Mammary epithelial cell (primary cell): ENCODE measurements at regions of chr2 and their contacts with region 1.

Region 1: GRCh38 chr2:216666461-216667233 is 28.7 kb downstream of the IGFBP5 start:
- DNase-seq: peak; percentile 67
- H3K4me3 ChIP-seq: no peak overlapping the region
- H3K27ac ChIP-seq: no peak overlapping the region
- H3K4me1 ChIP-seq: peaks cover 30% of the 10 kb centered on the region
- H3K27me3 ChIP-seq: no peaks in the 10 kb centered on the region
- CTCF ChIP-seq: peak; percentile 99 to 100

Region 2: GRCh38 chr2:215949991-215950404 is 716.6 kb before region 1 on chr2:
- CTCF ChIA-PET with region 1: no interaction called
- dilution Hi-C with region 1: no loop called
- in situ Hi-C with region 1: no loop called
- intact Hi-C with region 1: loop called (anchors 5 kb)
- DNase-seq: peak; percentile 60
- H3K4me3 ChIP-seq: no peak overlapping the region
- H3K27ac ChIP-seq: no peak overlapping the region
- H3K4me1 ChIP-seq: no peaks in the 10 kb centered on the region
- H3K27me3 ChIP-seq: no peaks in the 10 kb centered on the region
- CTCF ChIP-seq: peak; percentile 62 to 70

Region 3: DNA sequence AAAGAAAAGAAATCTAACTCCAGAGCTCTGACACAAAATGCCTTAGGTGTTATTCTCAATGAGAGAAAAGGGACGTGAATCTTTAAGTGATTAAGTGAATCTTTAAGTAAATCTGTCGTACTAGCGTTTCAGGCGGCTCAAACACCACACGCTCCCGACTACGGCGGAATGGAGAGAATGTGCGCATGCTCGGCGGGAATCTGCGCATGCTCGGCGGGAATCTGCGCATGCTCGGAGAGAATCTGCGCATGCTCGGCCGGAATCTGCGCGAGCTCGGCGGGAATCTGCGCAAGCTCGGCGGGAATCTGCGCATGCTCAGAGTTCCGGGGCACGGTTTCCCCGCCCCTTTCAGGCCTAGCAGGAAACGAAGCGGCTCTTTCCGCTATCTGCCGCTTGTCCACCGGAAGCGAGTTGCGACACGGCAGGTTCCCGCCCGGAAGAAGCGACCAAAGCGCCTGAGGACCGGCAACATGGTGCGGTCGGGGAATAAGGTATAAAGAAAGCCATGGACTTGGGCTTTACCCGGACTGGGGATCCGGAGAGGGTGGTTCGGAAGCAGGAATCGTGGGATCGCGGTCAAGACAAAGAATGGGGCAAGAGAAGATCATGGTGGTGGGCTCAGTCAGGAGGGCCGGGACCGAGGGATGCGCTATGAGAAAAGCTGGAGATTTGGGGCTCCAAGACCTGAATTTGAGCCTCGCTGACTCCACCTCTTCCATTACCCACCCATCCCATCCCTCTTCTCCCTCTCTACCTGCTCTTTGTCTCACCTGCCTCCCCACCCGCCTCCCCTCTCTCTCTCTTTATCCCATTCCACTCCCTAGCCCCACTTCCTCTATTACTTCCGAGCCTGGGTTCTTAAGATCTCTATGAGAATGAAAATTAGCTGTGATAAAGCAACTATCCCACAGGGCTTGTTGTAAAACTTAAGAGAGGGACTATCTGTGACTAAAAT is 557.4 kb before region 1 on chr2 and contains the start of gene XRCC5:
- CTCF ChIA-PET with region 1: no interaction called
- dilution Hi-C with region 1: no loop called
- in situ Hi-C with region 1: no loop called
- intact Hi-C with region 1: loop called (anchors 1 kb)
- DNase-seq: peak; percentile 95
- H3K4me3 ChIP-seq: peak within 1 kb of the TSS; percentile 85 to 90 (median 89)
- H3K27ac ChIP-seq: peak within 1 kb of the TSS; percentile 86
- H3K4me1 ChIP-seq: peaks cover 18% of the 10 kb centered on the region
- H3K27me3 ChIP-seq: no peaks in the 10 kb centered on the region
- CTCF ChIP-seq: no peak
- total RNA-seq, gene XRCC5: 191 to 245 TPM

Region 4: DNA sequence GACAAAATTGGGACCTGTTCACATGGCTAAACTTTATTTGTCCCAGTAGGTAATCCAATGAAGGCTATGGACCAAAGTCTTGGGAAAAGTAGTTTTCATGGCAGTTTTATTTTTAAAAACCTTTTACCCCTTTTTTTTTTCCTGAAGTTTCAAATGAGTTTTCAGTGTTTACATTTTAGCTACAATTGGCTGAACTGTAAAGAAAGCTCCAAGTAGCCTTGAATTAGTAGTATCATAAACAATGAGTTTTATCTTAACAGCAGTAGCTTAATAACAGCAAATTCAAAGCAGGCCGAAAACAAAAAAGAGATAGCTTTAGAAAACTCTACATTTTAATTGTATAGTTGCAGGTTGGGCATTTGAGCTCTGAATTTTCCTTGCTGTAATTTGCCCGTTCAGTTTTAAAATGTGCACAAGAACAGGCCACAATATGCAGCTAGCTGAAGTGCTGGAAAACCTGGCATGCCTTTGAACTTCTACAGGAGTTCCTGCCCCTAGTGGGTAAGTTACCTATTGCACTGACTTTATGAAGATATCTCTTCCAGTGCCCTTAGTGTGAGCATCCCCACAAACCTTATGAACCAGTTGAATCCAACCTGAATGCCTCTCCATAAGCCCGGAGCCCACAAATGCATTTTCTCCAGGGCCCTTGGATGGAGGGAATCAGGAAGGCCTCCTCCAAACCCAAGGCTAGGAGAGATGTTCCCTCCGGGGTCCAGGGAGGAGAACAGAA is 450.8 kb before region 1 on chr2:
- CTCF ChIA-PET with region 1: no interaction called
- dilution Hi-C with region 1: no loop called
- in situ Hi-C with region 1: no loop called
- intact Hi-C with region 1: loop called (anchors 10 kb)
- DNase-seq: no peak
- H3K4me3 ChIP-seq: no peak overlapping the region
- H3K27ac ChIP-seq: no peak overlapping the region
- H3K4me1 ChIP-seq: peaks cover 28% of the 10 kb centered on the region
- H3K27me3 ChIP-seq: no peaks in the 10 kb centered on the region
- CTCF ChIP-seq: peak; percentile 47 to 54

Region 5: GRCh38 chr2:216328347-216328746 is 338.3 kb before region 1 on chr2:
- CTCF ChIA-PET with region 1: no interaction called
- dilution Hi-C with region 1: no loop called
- in situ Hi-C with region 1: no loop called
- intact Hi-C with region 1: loop called (anchors 5 kb)
- DNase-seq: no peak
- H3K4me3 ChIP-seq: no peak overlapping the region
- H3K27ac ChIP-seq: no peak overlapping the region
- H3K4me1 ChIP-seq: no peaks in the 10 kb centered on the region
- H3K27me3 ChIP-seq: no peaks in the 10 kb centered on the region
- CTCF ChIP-seq: peak; percentile 39 to 48

Region 6: GRCh38 chr2:216519154-216519762 is 147.4 kb before region 1 on chr2:
- CTCF ChIA-PET with region 1: interaction called, 8 read pairs
- dilution Hi-C with region 1: no loop called
- in situ Hi-C with region 1: loop called (anchors 5 kb)
- intact Hi-C with region 1: loop called (anchors 1 kb)
- DNase-seq: peak; percentile 70
- H3K4me3 ChIP-seq: no peak overlapping the region
- H3K27ac ChIP-seq: no peak overlapping the region
- H3K4me1 ChIP-seq: peaks cover 15% of the 10 kb centered on the region
- H3K27me3 ChIP-seq: no peaks in the 10 kb centered on the region
- CTCF ChIP-seq: peak; percentile 72 to 78

Region 7: DNA sequence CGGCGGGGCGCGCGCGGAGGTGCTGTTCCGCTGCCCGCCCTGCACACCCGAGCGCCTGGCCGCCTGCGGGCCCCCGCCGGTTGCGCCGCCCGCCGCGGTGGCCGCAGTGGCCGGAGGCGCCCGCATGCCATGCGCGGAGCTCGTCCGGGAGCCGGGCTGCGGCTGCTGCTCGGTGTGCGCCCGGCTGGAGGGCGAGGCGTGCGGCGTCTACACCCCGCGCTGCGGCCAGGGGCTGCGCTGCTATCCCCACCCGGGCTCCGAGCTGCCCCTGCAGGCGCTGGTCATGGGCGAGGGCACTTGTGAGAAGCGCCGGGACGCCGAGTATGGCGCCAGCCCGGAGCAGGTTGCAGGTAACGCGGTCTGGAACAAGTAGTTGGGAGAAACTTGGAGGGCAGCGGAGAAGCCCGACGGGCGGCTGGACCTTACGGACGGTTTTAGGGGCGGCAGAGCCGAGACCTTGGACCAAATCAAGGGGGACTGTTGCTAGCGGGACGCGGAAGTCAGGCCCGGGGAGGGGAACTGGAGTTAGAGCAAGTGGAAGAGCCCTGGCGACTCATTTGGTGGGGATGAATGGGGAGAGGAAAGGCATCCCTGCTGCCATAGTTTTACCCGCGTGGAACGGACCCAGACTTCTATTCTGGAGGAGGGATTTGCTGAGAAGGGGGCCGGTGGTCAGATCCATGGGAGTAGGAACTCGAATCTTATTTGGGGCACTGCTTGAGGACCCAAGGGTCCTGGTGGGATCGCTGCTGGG is 32.9 kb before region 1 on chr2:
- CTCF ChIA-PET with region 1: interaction called, 7 read pairs
- dilution Hi-C with region 1: no loop called
- in situ Hi-C with region 1: no loop called
- intact Hi-C with region 1: loop called (anchors 1 kb)
- DNase-seq: peak; percentile 42
- H3K4me3 ChIP-seq: peak overlapping the region; percentile 71 to 93 (median 77)
- H3K27ac ChIP-seq: peak overlapping the region; percentile 61
- H3K4me1 ChIP-seq: peaks cover 21% of the 10 kb centered on the region
- H3K27me3 ChIP-seq: no peaks in the 10 kb centered on the region
- CTCF ChIP-seq: no peak